ENCODE measurements at regions of chr13 and their contacts with region 1.

Region 1: DNA sequence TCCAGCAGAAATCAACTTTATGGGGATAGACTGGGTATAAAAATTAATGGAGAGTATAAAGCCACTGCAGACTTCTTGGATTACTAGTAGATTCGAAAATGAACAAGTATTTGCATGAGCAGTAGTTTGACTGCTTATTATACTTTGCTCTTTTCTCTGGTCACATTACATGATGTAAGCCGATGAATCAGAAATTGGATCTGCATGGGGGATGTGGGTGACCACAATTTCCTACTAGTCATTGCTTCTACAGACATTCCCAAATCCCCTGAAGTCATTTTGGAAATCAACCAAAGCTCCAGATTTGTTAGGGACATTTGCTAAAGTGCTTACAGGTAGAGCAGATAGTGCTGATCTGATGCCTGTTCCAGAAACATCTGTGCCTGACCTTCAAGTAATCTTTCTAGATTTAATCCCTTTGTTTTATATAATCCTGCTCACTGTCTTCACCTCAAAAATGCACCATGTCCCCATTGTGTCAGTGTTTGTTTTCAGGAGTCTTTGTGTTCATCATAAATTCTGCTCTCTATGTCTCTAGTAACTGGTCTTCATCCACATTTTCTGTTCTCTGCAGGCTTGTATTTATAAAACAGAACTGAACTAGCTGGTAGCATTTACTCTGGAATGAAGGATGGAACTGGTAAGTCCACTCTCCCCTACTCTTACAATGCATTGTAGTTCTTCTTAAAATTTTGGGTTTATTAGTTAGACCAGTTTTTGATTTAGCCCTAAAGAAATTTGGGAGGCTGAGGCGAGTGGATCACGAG is 201.5 kb upstream of the CSNK1A1L start:
- DNase-seq: no peak
- ATAC-seq: no peak
- H3K4me3 ChIP-seq: no peak overlapping the region
- H3K27ac ChIP-seq: no peak overlapping the region
- H3K4me1 ChIP-seq: no peaks in the 10 kb centered on the region
- H3K27me3 ChIP-seq: no peaks in the 10 kb centered on the region
- CTCF ChIP-seq: no peak
- EP300 ChIP-seq: no peak
- POLR2A ChIP-seq: no peak
- RAD21 ChIP-seq: no peak

Region 2: GRCh38 chr13:37602747-37603381 is 295.9 kb after region 1 on chr13:
- CTCF ChIA-PET with region 1: no interaction called
- POLR2A ChIA-PET with region 1: no interaction called
- in situ Hi-C with region 1: no loop called
- intact Hi-C with region 1: loop called (anchors 5 kb)
- DNase-seq: peak; percentile 5
- ATAC-seq: no peak
- H3K4me3 ChIP-seq: no peak overlapping the region
- H3K27ac ChIP-seq: no peak overlapping the region
- H3K4me1 ChIP-seq: no peaks in the 10 kb centered on the region
- H3K27me3 ChIP-seq: no peaks in the 10 kb centered on the region
- CTCF ChIP-seq: no peak
- EP300 ChIP-seq: no peak
- POLR2A ChIP-seq: no peak
- RAD21 ChIP-seq: no peak

Measured in HepG2 (cell line).